Mammary epithelial cell (primary cell): ENCODE measurements at regions of chr4 and their contacts with region 1.

Region 1: GRCh38 chr4:162163852-162164759 is at the start of gene FSTL5:
- DNase-seq: peak; percentile 82
- H3K4me3 ChIP-seq: peak within 1 kb of the TSS; percentile 44 to 64 (median 47)
- H3K27ac ChIP-seq: no peak within 1 kb of the TSS
- H3K4me1 ChIP-seq: peaks cover 13% of the 10 kb centered on the region
- H3K27me3 ChIP-seq: no peaks in the 10 kb centered on the region
- CTCF ChIP-seq: no peak
- total RNA-seq, gene FSTL5: not detected

Region 2: DNA sequence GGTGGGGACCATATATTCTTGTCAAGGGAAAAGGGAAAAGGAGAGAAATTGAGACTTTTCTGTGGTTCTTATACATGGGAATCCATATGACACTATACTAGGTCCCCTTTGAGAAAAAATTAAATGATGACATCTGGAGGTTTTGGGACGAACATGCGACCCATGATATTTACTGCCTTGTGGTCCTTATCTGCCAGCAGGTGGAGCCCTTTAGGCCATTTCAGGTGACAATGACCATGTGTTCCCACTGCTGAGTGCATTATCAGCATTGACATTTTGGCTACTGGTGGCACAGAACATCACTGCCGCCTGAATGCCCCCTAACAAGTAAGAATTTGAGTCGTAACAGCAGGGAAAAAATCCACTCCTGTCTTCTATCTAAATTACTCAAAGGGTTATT is 843.7 kb before region 1 on chr4:
- CTCF ChIA-PET with region 1: no interaction called
- dilution Hi-C with region 1: no loop called
- in situ Hi-C with region 1: no loop called
- intact Hi-C with region 1: loop called (anchors 5 kb)
- DNase-seq: peak; percentile 13
- H3K4me3 ChIP-seq: no peak overlapping the region
- H3K27ac ChIP-seq: no peak overlapping the region
- H3K4me1 ChIP-seq: no peaks in the 10 kb centered on the region
- H3K27me3 ChIP-seq: no peaks in the 10 kb centered on the region
- CTCF ChIP-seq: peak; percentile 36 to 62

Region 3: GRCh38 chr4:161564230-161564834 is 599.8 kb before region 1 on chr4:
- CTCF ChIA-PET with region 1: no interaction called
- dilution Hi-C with region 1: no loop called
- in situ Hi-C with region 1: no loop called
- intact Hi-C with region 1: loop called (anchors 1 kb)
- DNase-seq: no peak
- H3K4me3 ChIP-seq: no peak overlapping the region
- H3K27ac ChIP-seq: no peak overlapping the region
- H3K4me1 ChIP-seq: peaks cover 7% of the 10 kb centered on the region
- H3K27me3 ChIP-seq: no peaks in the 10 kb centered on the region
- CTCF ChIP-seq: peak; percentile 35 to 41

Region 4: DNA sequence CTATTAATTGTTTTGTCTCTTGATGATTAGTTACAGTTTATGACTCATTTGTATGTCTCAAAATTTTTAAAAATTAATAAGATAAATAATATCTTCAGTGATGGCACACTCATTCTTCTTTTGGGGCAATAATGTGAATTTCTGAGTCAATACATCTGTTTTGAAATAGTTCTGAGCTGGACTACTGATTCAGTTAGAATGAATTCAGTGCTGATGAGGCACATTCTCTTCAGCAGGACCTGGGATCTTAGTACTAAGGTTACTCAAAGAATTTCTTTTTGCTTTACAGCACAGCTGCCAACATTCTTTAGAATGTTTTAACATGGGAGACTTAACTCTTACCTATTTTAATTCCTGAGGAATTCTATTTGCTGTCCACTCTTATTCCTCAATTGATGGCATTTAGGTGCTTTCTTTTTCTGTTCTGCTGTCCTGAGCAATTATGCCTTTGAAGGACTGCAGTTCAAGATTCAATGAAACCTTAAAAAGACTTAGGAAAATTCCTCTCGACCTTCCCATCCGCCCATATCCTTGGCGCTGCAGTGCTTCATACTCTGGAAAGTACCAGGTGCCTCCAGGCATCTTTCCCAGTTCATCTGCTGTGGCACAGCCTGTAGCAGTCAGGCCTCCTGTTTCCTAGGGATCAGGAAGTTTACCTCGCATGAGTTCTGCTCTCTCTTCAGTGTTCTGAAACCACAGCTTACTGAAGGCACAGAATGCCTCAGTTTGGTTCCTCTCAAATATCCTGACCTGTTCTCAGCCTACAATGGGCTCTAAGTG is 214.0 kb before region 1 on chr4:
- CTCF ChIA-PET with region 1: no interaction called
- dilution Hi-C with region 1: no loop called
- in situ Hi-C with region 1: no loop called
- intact Hi-C with region 1: loop called (anchors 10 kb)
- DNase-seq: peak; percentile 40
- H3K4me3 ChIP-seq: no peak overlapping the region
- H3K27ac ChIP-seq: no peak overlapping the region
- H3K4me1 ChIP-seq: peaks cover 5% of the 10 kb centered on the region
- H3K27me3 ChIP-seq: no peaks in the 10 kb centered on the region
- CTCF ChIP-seq: no peak